Right ventricle myocardium superior (tissue), 1 donor: ENCODE measurements at regions of chr6 and their contacts with region 1.

Region 1: DNA sequence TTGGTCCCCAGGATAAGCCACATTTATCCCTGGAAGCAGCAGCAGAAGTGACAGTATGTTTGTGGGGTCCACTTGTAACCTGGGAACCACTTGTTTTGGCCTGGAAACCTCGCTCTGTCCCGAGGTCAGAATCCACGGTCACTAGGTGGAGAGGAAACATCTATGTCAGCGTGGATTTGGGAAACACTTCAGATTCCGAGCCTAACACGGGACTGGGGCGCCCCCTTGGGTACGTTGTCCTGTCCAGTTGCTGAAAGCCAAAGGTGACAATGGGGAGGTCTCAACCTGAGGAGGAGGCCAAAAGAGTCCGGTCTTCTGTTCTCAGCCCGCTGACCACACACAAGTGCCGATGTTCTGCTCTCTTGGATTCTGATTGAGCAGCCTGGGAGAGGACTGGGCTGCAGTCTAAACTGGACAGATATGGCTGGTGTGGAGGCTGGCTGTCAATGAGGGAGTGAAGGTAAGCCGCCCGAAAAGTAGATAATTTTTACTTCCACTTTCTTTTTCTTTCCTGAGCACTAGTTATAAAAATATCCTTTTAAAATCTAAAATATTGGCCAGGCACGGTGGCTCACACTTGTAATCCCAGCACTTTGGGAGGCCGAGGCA is 4.9 kb upstream of the ZFP57 start:
- DNase-seq: peak; percentile 71
- ATAC-seq: peak; percentile 91

Region 2: GRCh38 chr6:29649701-29650673 is 35.8 kb before region 1 on chr6:
- intact Hi-C with region 1: loop called (anchors 5 kb)
- DNase-seq: peak; percentile 98
- ATAC-seq: peak; percentile 97